ENCODE measurements at regions of chr2 and their contacts with region 1.

Region 1: GRCh38 chr2:148099989-148100388 is 79.1 kb downstream of the MBD5 start:
- DNase-seq: no peak

Region 2: DNA sequence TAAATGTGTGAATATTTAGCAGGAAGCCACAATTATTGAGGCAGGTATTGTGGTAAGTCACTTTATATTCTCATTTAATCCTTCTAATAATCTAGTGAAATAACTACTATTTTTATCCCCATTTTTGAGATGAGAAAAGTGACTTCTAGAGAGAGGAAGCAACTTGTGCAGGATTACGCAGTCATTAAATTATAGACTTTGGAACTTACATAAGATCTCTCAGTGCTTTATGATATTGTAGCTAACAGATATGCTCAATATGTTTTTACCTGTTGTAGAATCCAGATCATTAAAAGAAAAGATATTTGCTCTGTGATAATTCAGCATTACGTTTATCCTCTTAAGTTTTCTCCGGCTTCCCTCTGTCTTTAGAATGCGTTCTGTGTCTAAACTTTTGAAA is 28.6 kb before region 1 on chr2:
- intact Hi-C with region 1: loop called in 1 of 2 experiments (anchors 1 kb)
- DNase-seq: no peak

Region 3: GRCh38 chr2:148130581-148130980 is 30.6 kb after region 1 on chr2:
- intact Hi-C with region 1: no loop called
- DNase-seq: no peak